Testis (tissue), 5 donors: ENCODE measurements at regions of chr11 and their contacts with region 1.

Region 1: DNA sequence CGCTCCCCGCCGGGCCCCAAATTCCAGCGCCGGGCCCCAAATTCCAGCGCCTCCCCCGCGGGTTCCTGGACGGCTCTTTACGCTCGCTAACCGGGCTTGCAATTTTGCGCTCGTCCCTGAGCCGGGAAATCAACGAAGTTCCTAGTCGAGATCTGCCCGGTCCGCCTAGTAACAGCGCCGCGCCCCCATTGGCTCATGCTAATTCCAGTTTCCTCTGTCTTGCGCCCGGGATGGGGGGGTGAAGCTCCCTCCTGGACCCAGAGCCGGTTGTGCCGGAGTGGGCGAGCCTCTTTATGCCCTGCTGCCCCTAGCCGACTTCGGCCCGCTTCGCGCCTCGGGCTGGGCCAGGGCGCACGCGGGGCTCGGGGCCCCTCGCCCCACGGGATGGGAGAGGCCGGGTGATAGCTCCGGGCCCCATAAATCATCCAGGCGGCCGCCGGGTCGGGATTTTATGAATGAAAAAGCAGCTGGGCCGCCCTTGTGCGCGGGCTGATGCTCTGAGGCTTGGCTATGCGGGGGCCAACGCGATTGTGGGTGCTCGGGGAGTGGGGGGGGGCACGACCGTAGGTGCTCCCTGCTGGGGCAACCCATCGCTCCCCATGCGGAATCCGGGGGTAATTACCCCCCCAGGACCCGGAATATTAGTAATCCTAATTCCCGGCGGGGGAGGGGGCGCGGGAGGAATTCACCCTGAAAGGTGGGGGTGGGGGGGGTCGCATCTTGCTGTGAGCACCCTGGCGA is 1.8 kb upstream of the CCND1 start:
- DNase-seq: peak; percentile 93
- H3K4me3 ChIP-seq: peak overlapping the region in 1 of 2 donors; percentile 61
- H3K27ac ChIP-seq: peak overlapping the region in 1 of 2 donors; percentile 67
- H3K4me1 ChIP-seq: peaks cover 27% of the 10 kb centered on the region
- H3K27me3 ChIP-seq: no peaks in the 10 kb centered on the region
- CTCF ChIP-seq: no peak
- POLR2A ChIP-seq: no peak

Region 2: DNA sequence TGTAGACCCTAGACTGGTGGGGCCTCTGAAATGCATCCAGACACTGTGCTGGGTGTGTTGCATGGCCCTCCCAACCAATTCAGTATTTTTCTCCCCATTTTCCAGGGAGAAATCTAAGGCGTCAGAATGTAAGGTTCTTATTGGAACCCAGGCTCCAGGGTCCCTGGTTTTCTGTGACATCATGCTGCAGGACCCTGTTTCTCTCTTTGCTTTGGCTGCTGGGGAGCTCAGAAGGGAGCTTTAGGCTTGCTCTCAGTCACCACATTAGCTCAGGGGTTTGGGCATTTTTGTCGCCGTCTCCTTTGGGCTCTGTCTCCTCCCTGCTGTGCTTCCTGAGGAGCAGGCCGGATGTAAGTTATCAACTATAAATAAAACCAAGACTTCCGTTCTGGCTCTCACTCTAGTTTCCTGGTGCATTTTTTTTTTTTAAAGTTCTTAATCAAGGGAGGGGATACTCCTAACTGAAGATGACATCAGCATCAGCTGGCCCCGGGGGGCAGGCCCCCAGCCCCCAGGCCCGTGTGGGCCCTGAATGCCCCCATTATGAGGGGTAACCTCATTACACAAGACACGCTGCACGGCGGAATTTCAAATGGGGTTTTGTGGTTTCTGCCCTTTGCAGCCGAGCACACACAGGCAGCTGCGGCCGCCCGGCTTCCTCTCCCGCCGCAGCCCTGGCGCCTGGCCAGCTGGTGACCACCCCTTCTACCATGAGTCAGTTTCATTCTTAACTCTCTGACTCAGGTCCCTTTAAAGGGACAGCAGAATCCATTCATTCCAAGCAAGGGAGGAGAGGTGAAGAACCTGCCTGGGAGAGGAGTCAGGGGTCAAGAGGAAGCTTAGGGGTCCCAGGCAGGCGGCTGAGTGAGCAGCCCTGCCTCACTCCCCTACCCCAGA is 342.0 kb before region 1 on chr11:
- intact Hi-C with region 1: loop called (anchors 10 kb)
- DNase-seq: peak; percentile 69
- H3K4me3 ChIP-seq: no peak overlapping the region
- H3K27ac ChIP-seq: no peak overlapping the region
- H3K4me1 ChIP-seq: peaks cover 3% of the 10 kb centered on the region
- H3K27me3 ChIP-seq: no peaks in the 10 kb centered on the region
- CTCF ChIP-seq: no peak
- POLR2A ChIP-seq: no peak

Region 3: DNA sequence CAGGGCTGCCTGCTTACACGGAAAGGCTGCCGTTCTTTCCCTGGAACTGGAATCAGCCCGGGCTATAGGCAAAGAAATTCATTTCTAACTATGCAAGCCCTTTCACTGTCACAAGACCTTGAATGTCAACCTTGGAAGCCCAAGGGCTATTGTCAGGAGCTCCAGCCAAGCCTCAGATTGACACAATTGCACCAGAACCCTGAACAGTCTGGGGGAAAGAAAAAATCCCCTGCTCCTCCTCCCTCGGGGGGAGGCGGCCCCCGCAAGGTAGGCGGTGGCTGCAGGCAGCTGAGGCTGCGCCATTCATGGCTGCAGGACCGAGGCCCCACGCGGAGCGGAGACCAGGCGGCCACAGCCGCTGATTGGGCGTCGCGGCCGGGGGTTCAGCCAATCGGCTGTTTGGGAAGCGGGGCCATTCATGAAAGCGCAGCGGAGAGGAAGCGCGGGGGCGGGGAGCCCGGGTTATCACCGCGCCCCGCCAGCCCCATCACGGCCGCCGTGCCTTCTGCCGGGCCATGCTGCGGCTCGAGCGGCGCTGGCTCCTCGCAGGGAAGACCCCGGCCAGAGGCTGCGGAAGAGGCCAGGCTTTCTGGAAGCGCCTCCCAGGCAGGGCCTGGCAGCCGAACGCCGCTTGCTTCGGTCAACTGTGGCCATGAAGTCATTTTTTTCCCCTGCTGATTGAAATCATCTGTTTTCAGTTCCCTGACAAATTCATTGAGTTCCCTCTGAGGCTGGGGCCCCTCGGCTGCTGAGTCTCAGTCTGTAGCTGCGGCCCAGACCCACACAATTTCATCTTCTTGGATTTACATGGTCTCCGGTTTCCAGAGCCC is 195.8 kb before region 1 on chr11:
- intact Hi-C with region 1: loop called (anchors 10 kb)
- DNase-seq: peak; percentile 92
- H3K4me3 ChIP-seq: peak overlapping the region; percentile 41 to 54
- H3K27ac ChIP-seq: peak overlapping the region in 1 of 2 donors; percentile 36
- H3K4me1 ChIP-seq: peaks cover 21% of the 10 kb centered on the region
- H3K27me3 ChIP-seq: no peaks in the 10 kb centered on the region
- CTCF ChIP-seq: no peak
- POLR2A ChIP-seq: no peak

Region 4: GRCh38 chr11:69567951-69568808 is 70.9 kb before region 1 on chr11:
- intact Hi-C with region 1: no loop called
- DNase-seq: no peak
- H3K4me3 ChIP-seq: no peak overlapping the region
- H3K27ac ChIP-seq: no peak overlapping the region
- H3K4me1 ChIP-seq: no peaks in the 10 kb centered on the region
- H3K27me3 ChIP-seq: no peaks in the 10 kb centered on the region
- CTCF ChIP-seq: no peak
- POLR2A ChIP-seq: no peak

Region 5: DNA sequence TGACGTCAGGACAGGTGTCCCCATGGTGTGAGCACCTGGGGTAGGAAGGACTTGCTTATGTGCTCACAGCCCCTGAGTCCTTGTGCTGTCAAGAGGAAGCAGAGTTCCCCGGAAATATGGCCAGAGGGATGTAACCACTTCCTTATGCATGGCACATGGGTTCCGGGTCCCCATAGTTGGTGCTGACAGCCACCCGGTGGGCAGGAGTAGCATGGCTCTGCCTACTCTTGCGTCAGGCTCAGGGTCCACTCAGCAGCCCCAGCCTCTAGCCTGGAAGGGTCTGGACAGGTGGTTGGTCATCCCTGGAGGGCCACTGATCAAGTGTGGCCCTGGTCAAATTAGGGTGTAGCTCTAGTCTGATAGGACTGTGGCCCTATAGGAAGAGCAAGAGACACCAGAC is 41.0 kb before region 1 on chr11:
- intact Hi-C with region 1: no loop called
- DNase-seq: no peak
- H3K4me3 ChIP-seq: no peak overlapping the region
- H3K27ac ChIP-seq: no peak overlapping the region
- H3K4me1 ChIP-seq: no peaks in the 10 kb centered on the region
- H3K27me3 ChIP-seq: no peaks in the 10 kb centered on the region
- CTCF ChIP-seq: no peak
- POLR2A ChIP-seq: no peak